Activated T-helper 1 cell treated with anti-CD3 and anti-CD28 coated beads, Interleukin-12 subunit alpha, Interleukin-12 subunit beta, Interleukin-2, Interleukin-4 antibody, amounts not matched to agents 30 ng/mL and 10 ng/mL and 1 ng/mL, durations not matched to agents 14 hours and 24 hours and 36 hours (primary cell): ENCODE measurements at regions of chr20 and their contacts with region 1.

Region 1: GRCh38 chr20:49768204-49769047 is 44.2 kb upstream of the SLC9A8 start:
- DNase-seq: peak; percentile 49
- H3K4me3 Mint-ChIP-seq: peak overlapping the region; percentile 29
- H3K27ac Mint-ChIP-seq: no peak overlapping the region
- H3K4me1 Mint-ChIP-seq: peaks cover 38% of the 10 kb centered on the region
- H3K27me3 Mint-ChIP-seq: peaks cover 43% of the 10 kb centered on the region

Region 2: GRCh38 chr20:49603209-49603627 is 165.2 kb before region 1 on chr20:
- intact Hi-C with region 1: no loop called
- DNase-seq: no peak
- H3K4me3 Mint-ChIP-seq: no peak overlapping the region
- H3K27ac Mint-ChIP-seq: no peak overlapping the region
- H3K4me1 Mint-ChIP-seq: peaks cover 51% of the 10 kb centered on the region
- H3K27me3 Mint-ChIP-seq: no peaks in the 10 kb centered on the region

Region 3: DNA sequence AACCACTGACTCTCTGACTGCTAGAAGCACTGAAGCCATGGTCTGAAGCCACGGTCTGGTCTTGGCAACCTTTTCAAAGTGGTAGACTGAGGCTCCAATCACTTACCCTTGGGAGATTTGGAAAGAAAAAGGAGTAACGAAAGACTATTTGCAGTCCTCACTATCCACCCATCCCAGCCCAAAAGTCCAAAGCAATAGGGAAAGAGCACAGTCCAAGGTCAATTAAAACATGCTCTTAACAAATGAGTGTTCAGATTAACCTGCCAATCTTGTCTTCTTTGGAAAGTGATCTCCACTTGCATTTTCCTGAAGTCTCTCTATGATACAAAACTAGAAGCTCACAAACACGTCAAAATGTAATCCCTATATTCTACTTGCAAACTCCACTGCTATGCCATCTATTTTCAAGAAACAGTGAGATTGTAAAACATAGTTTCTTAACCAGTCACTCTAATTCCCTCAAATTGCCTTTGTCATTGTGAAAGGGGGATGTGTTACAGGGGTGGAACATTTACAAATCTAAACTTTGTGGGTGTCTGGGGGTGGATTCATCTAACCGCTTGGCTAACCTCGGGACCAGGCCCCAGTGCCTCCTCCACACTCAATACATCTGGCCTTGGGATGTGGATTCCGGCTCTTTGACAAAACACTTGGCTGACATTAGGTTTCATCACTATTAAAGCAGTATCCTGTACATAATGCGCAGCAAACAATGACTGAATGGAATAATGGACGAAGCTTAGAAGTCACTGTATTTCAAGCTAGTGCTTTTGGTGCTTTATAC is 111.1 kb before region 1 on chr20:
- intact Hi-C with region 1: no loop called
- DNase-seq: no peak
- H3K4me3 Mint-ChIP-seq: no peak overlapping the region
- H3K27ac Mint-ChIP-seq: no peak overlapping the region
- H3K4me1 Mint-ChIP-seq: peaks cover 27% of the 10 kb centered on the region
- H3K27me3 Mint-ChIP-seq: no peaks in the 10 kb centered on the region

Region 4: GRCh38 chr20:49797344-49797615 is 28.9 kb after region 1 on chr20:
- intact Hi-C with region 1: loop called (anchors 5 kb)
- DNase-seq: no peak
- H3K4me3 Mint-ChIP-seq: no peak overlapping the region
- H3K27ac Mint-ChIP-seq: no peak overlapping the region
- H3K4me1 Mint-ChIP-seq: peaks cover 47% of the 10 kb centered on the region
- H3K27me3 Mint-ChIP-seq: peaks cover 17% of the 10 kb centered on the region

Region 5: DNA sequence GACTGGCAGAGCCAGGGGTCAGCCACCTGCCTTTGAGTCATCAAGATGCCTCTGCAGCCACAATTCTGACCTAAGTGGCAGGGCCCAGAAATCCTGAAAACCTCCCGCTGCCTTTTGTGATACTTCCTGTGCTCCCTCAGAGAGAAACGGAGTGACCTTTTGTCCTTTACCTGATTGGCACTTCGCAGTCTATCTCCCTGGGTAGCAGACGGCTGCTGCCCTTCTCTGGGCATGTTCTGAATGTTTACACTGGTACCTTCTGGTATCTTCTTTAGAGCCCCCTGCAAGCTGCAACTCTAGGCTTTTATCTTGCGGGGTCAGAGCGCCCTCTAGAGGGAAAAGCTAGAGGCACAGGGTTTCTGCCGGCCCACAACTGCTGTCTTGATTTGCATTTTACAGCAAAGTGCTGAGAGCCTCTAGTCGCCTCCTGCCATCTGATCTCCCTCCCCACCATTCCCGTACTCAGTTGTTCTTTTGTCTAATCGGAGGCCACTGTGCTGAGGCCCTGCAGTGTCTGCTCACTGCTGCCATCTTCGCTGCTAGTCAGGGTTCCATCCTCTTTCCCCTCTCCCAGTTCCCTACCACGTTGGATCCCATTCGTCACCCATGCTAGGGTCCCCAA is 120.0 kb after region 1 on chr20:
- intact Hi-C with region 1: no loop called
- DNase-seq: peak; percentile 17
- H3K4me3 Mint-ChIP-seq: no peak overlapping the region
- H3K27ac Mint-ChIP-seq: peak overlapping the region; percentile 40
- H3K4me1 Mint-ChIP-seq: peaks cover 21% of the 10 kb centered on the region
- H3K27me3 Mint-ChIP-seq: no peaks in the 10 kb centered on the region

Region 6: DNA sequence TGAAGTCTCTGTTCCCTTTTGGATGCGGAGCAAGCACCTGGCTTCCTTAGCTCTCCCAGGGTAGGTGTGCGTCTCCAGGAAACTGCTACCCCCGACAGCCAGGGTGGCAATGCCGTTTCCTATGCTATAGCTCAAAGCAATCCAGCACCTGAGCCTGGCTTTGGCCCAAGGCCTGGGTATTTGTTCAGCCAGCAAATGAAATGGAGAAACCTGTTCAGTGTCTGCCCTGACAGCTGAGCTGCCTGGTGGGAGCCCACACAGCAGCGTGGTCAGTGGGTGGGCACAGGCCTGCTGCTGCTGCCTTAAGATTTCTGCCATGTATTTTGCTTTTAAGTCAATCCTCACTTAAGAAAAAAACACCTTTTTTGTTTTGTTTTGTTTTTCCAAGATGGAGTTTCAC is 133.2 kb after region 1 on chr20:
- intact Hi-C with region 1: no loop called
- DNase-seq: no peak
- H3K4me3 Mint-ChIP-seq: no peak overlapping the region
- H3K27ac Mint-ChIP-seq: no peak overlapping the region
- H3K4me1 Mint-ChIP-seq: no peaks in the 10 kb centered on the region
- H3K27me3 Mint-ChIP-seq: peaks cover 2% of the 10 kb centered on the region